ENCODE measurements at regions of chr7 and their contacts with region 1.

Region 1: GRCh38 chr7:76314042-76314721 is 11.7 kb downstream of the HSPB1 start:
- DNase-seq: peak; percentile 97
- H3K4me3 ChIP-seq: no peak overlapping the region
- H3K27ac ChIP-seq: peak overlapping the region in 1 of 3 donors; percentile 66
- H3K4me1 ChIP-seq: peaks cover 15 to 26% of the 10 kb centered on the region in 2 donors
- H3K27me3 ChIP-seq: no peaks in the 10 kb centered on the region
- CTCF ChIP-seq: peak; percentile 98 to 100 (median 100)
- POLR2A ChIP-seq: no peak

Region 2: GRCh38 chr7:75679060-75679459 is 635.1 kb before region 1 on chr7:
- intact Hi-C with region 1: no loop called
- DNase-seq: no peak
- H3K4me3 ChIP-seq: no peak overlapping the region
- H3K27ac ChIP-seq: no peak overlapping the region
- H3K4me1 ChIP-seq: peaks cover 0 to 6% of the 10 kb centered on the region in 2 donors
- H3K27me3 ChIP-seq: no peaks in the 10 kb centered on the region
- CTCF ChIP-seq: no peak
- POLR2A ChIP-seq: no peak

Region 3: GRCh38 chr7:76179686-76180085 is 134.5 kb before region 1 on chr7:
- intact Hi-C with region 1: loop called (anchors 2 kb)
- DNase-seq: no peak
- H3K4me3 ChIP-seq: no peak overlapping the region
- H3K27ac ChIP-seq: no peak overlapping the region
- H3K4me1 ChIP-seq: no peaks in the 10 kb centered on the region
- H3K27me3 ChIP-seq: no peaks in the 10 kb centered on the region
- CTCF ChIP-seq: no peak
- POLR2A ChIP-seq: no peak

Region 4: GRCh38 chr7:76291343-76292212 is 22.6 kb before region 1 on chr7:
- intact Hi-C with region 1: loop called (anchors 2 kb)
- DNase-seq: peak; percentile 86 to 88
- H3K4me3 ChIP-seq: no peak overlapping the region
- H3K27ac ChIP-seq: peak overlapping the region; percentile 87 to 100 (median 100)
- H3K4me1 ChIP-seq: peaks cover 28 to 52% of the 10 kb centered on the region in 2 donors
- H3K27me3 ChIP-seq: no peaks in the 10 kb centered on the region
- CTCF ChIP-seq: peak; percentile 94 to 99 (median 98)
- POLR2A ChIP-seq: peak in 1 of 2 donors; percentile 56

Region 5: DNA sequence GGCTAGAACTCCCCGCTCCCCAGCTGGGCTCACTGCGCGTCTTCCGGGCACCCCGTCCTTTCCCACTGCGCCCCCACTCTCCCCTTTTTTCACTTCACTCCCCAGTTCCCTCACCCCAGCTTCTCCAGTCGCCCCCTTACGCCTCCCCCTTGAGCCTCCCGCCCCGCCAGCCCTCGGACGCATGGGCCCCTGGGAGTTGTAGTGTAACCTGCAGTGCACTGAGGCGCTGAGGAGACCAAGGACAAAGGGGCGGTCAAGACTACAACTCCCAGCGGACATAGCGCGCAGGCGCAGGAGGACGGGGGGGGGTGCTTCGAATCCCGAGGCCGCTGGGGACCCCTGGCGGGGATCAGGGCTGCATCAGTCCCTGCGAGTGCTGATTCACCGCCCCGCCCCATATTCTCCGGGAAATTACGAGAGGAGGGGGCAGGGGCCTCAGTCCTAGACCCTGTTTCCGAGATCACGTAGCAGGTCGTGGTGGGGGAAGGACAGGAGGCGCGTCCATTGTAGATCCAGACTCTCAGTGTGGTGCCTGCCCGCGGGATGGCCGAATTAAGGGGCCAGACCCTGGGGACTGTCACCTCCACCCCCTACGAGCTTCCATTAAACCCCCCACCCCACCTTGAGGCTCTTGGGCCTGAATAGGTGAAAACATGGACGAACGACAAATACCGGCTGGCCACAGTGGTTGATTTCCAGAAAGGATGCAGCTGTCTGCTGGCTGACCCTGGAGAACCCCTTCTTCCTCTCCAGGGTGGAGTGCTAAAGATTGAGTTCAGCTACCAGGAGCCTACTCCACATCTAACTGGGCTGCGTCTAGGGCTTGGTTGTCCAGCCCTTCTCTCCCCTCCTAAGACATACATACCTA is 45.2 kb after region 1 on chr7:
- intact Hi-C with region 1: loop called (anchors 5 kb)
- DNase-seq: peak; percentile 98 to 99
- H3K4me3 ChIP-seq: peak overlapping the region in 2 of 3 donors; percentile 89 to 97
- H3K27ac ChIP-seq: peak overlapping the region; percentile 99
- H3K4me1 ChIP-seq: peaks cover 25 to 34% of the 10 kb centered on the region in 2 donors
- H3K27me3 ChIP-seq: no peaks in the 10 kb centered on the region
- CTCF ChIP-seq: peak; percentile 28 to 94 (median 76)
- POLR2A ChIP-seq: no peak

Region 6: GRCh38 chr7:76383089-76383944 is 69.1 kb after region 1 on chr7:
- intact Hi-C with region 1: no loop called
- DNase-seq: no peak
- H3K4me3 ChIP-seq: no peak overlapping the region
- H3K27ac ChIP-seq: no peak overlapping the region
- H3K4me1 ChIP-seq: peaks cover 13 to 23% of the 10 kb centered on the region in 2 donors
- H3K27me3 ChIP-seq: no peaks in the 10 kb centered on the region
- CTCF ChIP-seq: no peak
- POLR2A ChIP-seq: no peak